Endothelial cell of umbilical vein (primary cell): ENCODE measurements at regions of chr16 and their contacts with region 1.

Region 1: GRCh38 chr16:55701442-55702319 is 45.9 kb downstream of the SLC6A2 start:
- DNase-seq: peak; percentile 49
- H3K4me3 ChIP-seq: no peak overlapping the region
- H3K27ac ChIP-seq: no peak overlapping the region
- H3K4me1 ChIP-seq: peaks cover 8% of the 10 kb centered on the region
- H3K27me3 ChIP-seq: peaks cover 7 to 8% of the 10 kb centered on the region in 2 experiments
- CTCF ChIP-seq: peak; percentile 65 to 69
- POLR2A ChIP-seq: no peak

Region 2: DNA sequence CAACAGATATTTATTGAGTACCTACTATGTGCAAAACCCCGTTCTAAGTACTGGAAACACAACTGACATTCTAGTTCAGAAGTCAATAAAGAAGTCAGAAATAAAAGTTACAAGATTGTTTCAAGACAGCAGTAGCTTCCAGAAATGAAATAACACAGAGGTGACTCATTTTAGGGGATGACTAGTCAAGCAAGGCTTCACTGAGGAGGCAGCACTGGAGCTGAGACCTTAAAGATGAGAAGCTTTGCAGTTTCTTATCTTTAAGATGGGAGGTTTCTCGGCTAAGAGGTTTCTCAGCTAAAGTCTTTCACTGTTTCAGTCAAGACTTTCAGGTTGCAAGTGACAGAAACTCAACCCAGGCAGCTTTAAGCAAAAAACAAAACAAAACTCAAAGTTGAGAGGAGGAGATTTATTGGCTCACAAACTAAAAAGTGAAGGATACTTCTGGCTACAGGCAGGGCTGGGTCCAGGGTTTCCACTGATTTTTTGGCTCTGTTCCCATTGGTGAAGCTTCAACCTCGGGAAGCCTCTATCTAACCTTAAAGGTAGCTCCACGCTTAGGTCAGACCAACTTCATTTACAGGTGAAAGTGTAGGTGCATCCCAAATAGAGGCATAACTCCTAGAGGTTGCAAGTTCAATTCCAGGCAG is 230.1 kb before region 1 on chr16:
- CTCF ChIA-PET with region 1: interaction called, 408 read pairs
- POLR2A ChIA-PET with region 1: no interaction called
- dilution Hi-C with region 1: no loop called
- intact Hi-C with region 1: no loop called
- DNase-seq: peak; percentile 39
- H3K4me3 ChIP-seq: no peak overlapping the region
- H3K27ac ChIP-seq: peak overlapping the region; percentile 67
- H3K4me1 ChIP-seq: peaks cover 21% of the 10 kb centered on the region
- H3K27me3 ChIP-seq: no peaks in the 10 kb centered on the region
- CTCF ChIP-seq: no peak
- POLR2A ChIP-seq: no peak

Region 3: GRCh38 chr16:55502801-55503366 is 198.8 kb before region 1 on chr16:
- CTCF ChIA-PET with region 1: interaction called, 69 read pairs
- POLR2A ChIA-PET with region 1: no interaction called
- dilution Hi-C with region 1: no loop called
- intact Hi-C with region 1: no loop called
- DNase-seq: peak; percentile 76
- H3K4me3 ChIP-seq: no peak overlapping the region
- H3K27ac ChIP-seq: peak overlapping the region; percentile 95
- H3K4me1 ChIP-seq: peaks cover 58% of the 10 kb centered on the region
- H3K27me3 ChIP-seq: no peaks in the 10 kb centered on the region
- CTCF ChIP-seq: no peak
- POLR2A ChIP-seq: peak; percentile 37

Region 4: GRCh38 chr16:55543472-55543871 is 158.2 kb before region 1 on chr16:
- CTCF ChIA-PET with region 1: interaction called, 15 read pairs
- POLR2A ChIA-PET with region 1: no interaction called
- dilution Hi-C with region 1: no loop called
- intact Hi-C with region 1: loop called (anchors 1 kb)
- DNase-seq: peak; percentile 47
- H3K4me3 ChIP-seq: no peak overlapping the region
- H3K27ac ChIP-seq: no peak overlapping the region
- H3K4me1 ChIP-seq: peaks cover 19% of the 10 kb centered on the region
- H3K27me3 ChIP-seq: no peaks in the 10 kb centered on the region
- CTCF ChIP-seq: no peak
- POLR2A ChIP-seq: no peak

Region 5: DNA sequence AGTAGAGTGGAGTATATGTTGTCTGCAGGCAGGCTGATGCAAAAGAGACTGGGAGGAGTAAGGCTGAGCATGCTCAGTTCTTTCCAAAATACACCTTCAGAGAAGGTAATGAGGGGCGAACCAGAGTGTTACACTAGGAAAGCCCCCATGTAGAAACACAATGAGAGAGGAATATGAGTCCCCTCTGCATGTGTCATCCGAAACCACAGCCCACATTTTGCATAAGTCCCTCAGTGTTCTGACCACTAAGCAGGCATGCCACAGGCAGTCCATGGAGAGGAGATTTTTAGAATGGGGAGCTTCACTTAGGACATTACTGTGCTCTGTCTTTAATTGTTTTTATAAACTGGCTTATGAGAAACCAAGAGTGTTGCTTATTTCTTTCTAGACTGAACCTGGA is 13.9 kb before region 1 on chr16:
- CTCF ChIA-PET with region 1: interaction called, 13 read pairs
- POLR2A ChIA-PET with region 1: no interaction called
- dilution Hi-C with region 1: no loop called
- intact Hi-C with region 1: no loop called
- DNase-seq: no peak
- H3K4me3 ChIP-seq: no peak overlapping the region
- H3K27ac ChIP-seq: no peak overlapping the region
- H3K4me1 ChIP-seq: no peaks in the 10 kb centered on the region
- H3K27me3 ChIP-seq: peaks cover 0 to 12% of the 10 kb centered on the region in 2 experiments
- CTCF ChIP-seq: no peak
- POLR2A ChIP-seq: no peak